ENCODE measurements at regions of chr18 and their contacts with region 1.

Region 1: DNA sequence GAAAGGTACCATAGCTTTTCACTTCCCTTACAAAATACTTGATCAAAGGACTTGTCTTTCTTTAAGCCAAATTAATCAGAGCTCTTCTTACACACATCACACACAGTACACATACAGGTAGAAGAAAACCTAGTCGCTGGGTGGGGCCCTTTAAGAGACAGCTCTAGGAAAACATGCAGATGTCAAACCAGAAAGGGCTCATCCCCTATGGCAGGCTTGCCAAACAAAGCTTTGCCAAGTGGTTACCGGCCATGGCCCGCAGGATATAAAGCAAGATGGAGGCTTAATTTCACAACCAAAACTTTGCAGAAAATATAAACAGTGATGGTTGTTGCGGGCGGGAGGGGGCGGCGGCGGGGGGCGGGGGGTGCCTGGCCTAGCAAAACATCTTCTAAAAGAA is 2156.0 kb upstream of the PIK3C3 start:
- DNase-seq: peak; percentile 83
- H3K4me3 Mint-ChIP-seq: peak overlapping the region; percentile 94
- H3K27ac Mint-ChIP-seq: peak overlapping the region; percentile 93
- H3K4me1 Mint-ChIP-seq: peaks cover 34% of the 10 kb centered on the region
- H3K27me3 Mint-ChIP-seq: no peaks in the 10 kb centered on the region
- CTCF ChIP-seq: no peak

Region 2: GRCh38 chr18:39788383-39788782 is 10.6 kb before region 1 on chr18:
- CTCF ChIA-PET with region 1: interaction called, 4 read pairs
- POLR2A ChIA-PET with region 1: interaction called, 34 read pairs
- intact Hi-C with region 1: no loop called
- DNase-seq: peak; percentile 18
- H3K4me3 Mint-ChIP-seq: no peak overlapping the region
- H3K27ac Mint-ChIP-seq: peak overlapping the region; percentile 36
- H3K4me1 Mint-ChIP-seq: peaks cover 45% of the 10 kb centered on the region
- H3K27me3 Mint-ChIP-seq: no peaks in the 10 kb centered on the region
- CTCF ChIP-seq: no peak